ENCODE measurements at regions of chr1 and their contacts with region 1.

Region 1: GRCh38 chr1:234309598-234310459 is 63.4 kb upstream of the COA6 start:
- DNase-seq: peak; percentile 84
- H3K4me3 Mint-ChIP-seq: no peak overlapping the region
- H3K27ac Mint-ChIP-seq: no peak overlapping the region
- H3K4me1 Mint-ChIP-seq: peaks cover 18% of the 10 kb centered on the region
- H3K27me3 Mint-ChIP-seq: peaks cover 15% of the 10 kb centered on the region

Region 2: DNA sequence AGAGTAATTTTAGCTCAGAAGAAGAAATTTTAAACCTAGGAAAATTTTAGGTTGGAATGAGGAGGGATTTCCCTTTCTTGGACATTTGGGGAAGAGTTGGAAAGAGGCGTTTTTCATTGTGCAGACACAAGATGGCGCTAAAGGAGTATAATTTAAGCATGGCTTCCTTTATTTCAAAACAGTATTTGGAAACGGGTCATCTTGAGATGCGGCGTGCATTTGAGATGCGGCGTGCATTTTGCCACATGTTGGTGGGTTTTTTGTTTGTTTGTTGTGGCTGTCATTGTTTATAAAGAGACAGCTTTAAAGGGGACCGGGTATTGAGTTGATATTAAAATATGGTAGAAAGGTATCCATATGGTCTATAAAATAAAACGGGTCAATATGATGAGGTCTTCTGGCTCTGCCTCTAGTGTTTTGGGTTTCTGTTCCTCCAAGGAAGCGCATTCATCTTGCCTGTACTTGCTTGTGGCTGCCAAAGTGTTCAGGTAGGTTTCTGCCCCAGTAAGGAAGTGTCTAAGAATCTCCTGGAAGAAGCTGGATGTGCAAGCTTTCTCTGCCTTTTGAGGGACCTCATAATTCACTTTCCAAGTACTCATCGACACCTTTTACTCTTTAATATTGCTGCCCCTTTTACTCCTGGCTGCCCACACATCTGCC is 195.1 kb before region 1 on chr1:
- CTCF ChIA-PET with region 1: interaction called, 63 read pairs
- POLR2A ChIA-PET with region 1: interaction called, 3 read pairs
- intact Hi-C with region 1: loop called (anchors 1 kb)
- DNase-seq: peak; percentile 38
- H3K4me3 Mint-ChIP-seq: peak overlapping the region; percentile 25
- H3K27ac Mint-ChIP-seq: no peak overlapping the region
- H3K4me1 Mint-ChIP-seq: peaks cover 7% of the 10 kb centered on the region
- H3K27me3 Mint-ChIP-seq: peaks cover 15% of the 10 kb centered on the region

Region 3: GRCh38 chr1:234154320-234155251 is 155.2 kb before region 1 on chr1:
- CTCF ChIA-PET with region 1: interaction called, 14 read pairs
- POLR2A ChIA-PET with region 1: no interaction called
- intact Hi-C with region 1: loop called (anchors 1 kb)
- DNase-seq: no peak
- H3K4me3 Mint-ChIP-seq: no peak overlapping the region
- H3K27ac Mint-ChIP-seq: no peak overlapping the region
- H3K4me1 Mint-ChIP-seq: peaks cover 7% of the 10 kb centered on the region
- H3K27me3 Mint-ChIP-seq: peaks cover 11% of the 10 kb centered on the region

Region 4: DNA sequence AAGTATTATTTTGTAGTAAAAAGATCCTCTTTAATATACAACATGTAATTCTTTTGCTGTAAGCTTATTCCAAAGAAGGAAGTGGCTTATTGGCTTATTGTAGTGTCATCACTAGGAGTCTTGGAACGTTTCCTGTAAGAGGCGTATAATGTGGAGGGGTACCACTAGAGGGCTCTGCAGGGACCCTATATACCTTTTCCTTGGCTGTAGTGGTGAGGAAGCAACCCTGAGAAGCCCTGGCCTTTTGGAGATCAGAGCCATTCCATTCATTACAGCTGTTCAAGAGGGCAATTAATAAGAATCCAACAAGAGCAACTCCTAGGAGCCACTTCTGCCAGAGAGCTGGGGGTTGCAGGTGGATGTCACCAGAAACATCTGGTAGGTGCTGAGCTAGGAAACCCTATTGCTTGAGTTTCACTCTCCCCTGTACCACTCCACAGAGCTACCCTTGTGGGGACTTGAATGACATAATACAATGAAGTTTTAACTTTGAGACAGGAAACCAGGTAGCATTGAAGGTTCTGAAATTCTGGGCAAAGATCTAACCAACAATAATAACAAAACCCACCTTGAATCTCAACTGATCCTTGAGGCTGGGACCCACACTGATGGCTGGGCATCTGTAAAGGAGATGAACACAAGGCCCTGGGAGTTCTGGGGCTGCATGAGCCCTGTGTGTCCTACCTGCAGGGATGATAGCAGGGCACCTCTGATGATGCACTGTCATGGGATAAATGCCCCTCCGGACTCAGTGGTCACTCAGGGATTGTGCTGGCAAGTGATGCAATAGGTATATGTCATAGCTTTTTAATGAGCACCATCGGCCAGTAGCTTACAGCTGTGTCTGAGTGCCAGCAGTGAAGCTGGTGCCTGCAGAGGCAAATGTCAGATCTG is 96.8 kb before region 1 on chr1:
- CTCF ChIA-PET with region 1: interaction called, 170 read pairs
- POLR2A ChIA-PET with region 1: no interaction called
- intact Hi-C with region 1: loop called (anchors 1 kb)
- DNase-seq: peak; percentile 32
- H3K4me3 Mint-ChIP-seq: no peak overlapping the region
- H3K27ac Mint-ChIP-seq: no peak overlapping the region
- H3K4me1 Mint-ChIP-seq: peaks cover 16% of the 10 kb centered on the region
- H3K27me3 Mint-ChIP-seq: peaks cover 33% of the 10 kb centered on the region

Region 5: GRCh38 chr1:234262754-234263105 is 47.1 kb before region 1 on chr1:
- CTCF ChIA-PET with region 1: interaction called, 12 read pairs
- POLR2A ChIA-PET with region 1: no interaction called
- intact Hi-C with region 1: no loop called
- DNase-seq: no peak
- H3K4me3 Mint-ChIP-seq: no peak overlapping the region
- H3K27ac Mint-ChIP-seq: no peak overlapping the region
- H3K4me1 Mint-ChIP-seq: peaks cover 12% of the 10 kb centered on the region
- H3K27me3 Mint-ChIP-seq: peaks cover 14% of the 10 kb centered on the region

Region 6: DNA sequence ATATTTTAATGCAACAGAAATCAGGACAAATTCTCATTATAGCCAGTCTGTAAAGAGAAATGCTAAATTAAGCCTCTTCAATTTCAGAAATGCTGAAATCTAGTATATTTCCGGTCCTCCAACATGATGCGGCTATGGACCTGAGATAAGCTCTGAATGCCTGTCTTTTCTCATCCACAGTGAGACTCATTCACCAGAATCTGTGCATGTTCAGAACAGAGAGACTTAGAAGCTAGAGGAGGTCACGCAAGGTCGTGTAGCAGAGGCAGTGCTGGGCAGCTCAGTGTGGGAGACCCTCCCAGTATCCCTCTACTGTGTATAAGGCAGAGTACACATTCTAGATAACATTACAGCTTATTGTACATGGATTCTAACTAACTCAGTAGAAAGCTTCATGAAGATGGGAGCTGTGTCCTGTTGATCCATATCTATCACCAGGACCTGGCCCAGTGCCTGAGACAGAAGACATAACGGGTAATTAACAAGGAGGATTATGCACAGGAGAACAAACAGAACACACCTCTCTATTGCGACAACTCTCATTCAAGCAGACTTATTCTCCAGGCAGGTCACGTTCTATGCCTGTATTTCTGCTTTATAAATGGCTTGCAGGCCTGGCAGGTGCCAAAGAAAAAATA is 33.6 kb before region 1 on chr1:
- CTCF ChIA-PET with region 1: interaction called, 14 read pairs
- POLR2A ChIA-PET with region 1: no interaction called
- intact Hi-C with region 1: loop called (anchors 1 kb)
- DNase-seq: no peak
- H3K4me3 Mint-ChIP-seq: no peak overlapping the region
- H3K27ac Mint-ChIP-seq: no peak overlapping the region
- H3K4me1 Mint-ChIP-seq: peaks cover 16% of the 10 kb centered on the region
- H3K27me3 Mint-ChIP-seq: peaks cover 26% of the 10 kb centered on the region

Region 7: DNA sequence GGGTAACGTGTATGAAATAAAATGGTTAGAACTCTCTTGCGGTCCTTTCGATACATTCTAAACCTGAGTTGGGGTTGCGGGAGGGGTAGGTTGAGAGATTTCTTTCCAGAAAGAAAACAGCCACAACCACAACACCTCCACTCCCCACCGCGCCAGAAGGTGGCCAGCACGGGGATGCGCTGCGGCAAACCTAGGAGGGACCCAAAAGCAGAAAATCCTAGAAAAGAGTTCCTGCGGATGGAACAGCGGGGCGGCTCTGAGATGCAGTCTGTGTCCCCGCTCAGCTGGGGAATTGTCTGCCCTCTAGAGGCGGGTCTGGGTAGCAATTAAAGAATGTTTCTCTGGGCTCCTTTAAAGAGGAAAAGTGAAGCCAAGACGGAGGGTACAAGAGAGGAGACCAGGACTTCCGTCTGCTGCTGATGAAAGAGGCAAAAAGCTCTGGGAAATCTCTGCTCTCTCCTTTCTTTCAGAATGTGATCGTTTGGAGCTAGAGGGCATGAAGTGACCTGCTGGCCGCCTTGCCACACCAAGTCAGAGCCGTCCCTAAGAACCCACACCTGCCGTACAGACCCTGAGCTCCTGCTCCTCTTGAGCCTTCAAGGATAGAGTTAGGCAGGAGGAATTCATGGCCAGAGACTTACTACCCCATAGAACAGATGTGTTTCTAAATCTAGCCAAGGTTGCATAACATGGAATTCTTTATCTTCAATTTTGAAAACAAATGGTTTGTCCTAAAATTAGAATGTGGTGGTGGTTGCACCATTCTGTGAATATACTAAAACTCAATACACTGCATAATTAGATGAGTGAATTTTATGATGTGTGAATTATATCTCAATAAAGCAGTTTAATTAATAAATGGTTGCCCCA is 16.9 kb after region 1 on chr1:
- CTCF ChIA-PET with region 1: interaction called, 83 read pairs
- POLR2A ChIA-PET with region 1: no interaction called
- intact Hi-C with region 1: loop called (anchors 1 kb)
- DNase-seq: peak; percentile 75
- H3K4me3 Mint-ChIP-seq: peak overlapping the region; percentile 72
- H3K27ac Mint-ChIP-seq: no peak overlapping the region
- H3K4me1 Mint-ChIP-seq: peaks cover 16% of the 10 kb centered on the region
- H3K27me3 Mint-ChIP-seq: peaks cover 13% of the 10 kb centered on the region

Region 8: DNA sequence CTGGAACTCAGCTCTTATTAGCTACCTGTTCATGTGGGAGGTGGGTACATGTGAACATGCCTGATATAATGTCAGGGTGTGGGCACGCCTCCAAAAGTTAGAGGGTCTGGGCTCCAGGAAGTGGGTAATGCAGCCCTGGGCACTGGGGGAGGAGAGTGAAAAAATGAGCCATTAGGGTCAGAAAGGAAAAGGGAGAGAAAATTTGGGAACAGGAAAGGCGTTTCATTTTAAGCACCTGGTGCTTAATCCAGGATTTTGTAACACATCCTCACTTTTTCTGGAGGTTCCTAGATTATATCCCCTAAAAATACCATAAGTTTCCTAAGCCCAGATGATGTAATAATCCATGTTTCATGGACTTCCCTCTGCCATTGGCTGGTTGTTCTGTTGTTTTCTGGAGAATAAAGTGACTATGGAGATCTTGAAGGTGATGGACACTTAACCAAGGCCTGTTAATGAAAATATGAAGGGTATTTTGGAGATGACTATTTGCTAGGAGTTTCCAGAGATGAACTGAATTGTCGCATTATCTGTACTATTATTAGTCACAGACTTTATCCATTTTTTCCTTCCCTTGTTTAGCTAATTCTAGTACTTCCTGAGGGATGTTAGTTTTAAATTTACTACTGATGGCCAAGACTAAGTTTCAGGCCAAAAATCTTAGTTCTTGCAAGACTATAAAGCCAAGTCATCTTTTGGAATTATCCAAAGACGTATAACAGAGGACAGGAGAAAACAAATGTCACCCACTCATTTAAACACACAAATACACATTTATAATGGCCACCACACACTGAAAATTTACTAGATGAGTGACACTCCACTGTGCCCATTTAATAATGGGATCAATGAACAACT is 193.6 kb after region 1 on chr1:
- CTCF ChIA-PET with region 1: no interaction called
- POLR2A ChIA-PET with region 1: no interaction called
- intact Hi-C with region 1: no loop called
- DNase-seq: no peak
- H3K4me3 Mint-ChIP-seq: no peak overlapping the region
- H3K27ac Mint-ChIP-seq: no peak overlapping the region
- H3K4me1 Mint-ChIP-seq: peaks cover 63% of the 10 kb centered on the region
- H3K27me3 Mint-ChIP-seq: no peaks in the 10 kb centered on the region